ENCODE measurements at regions of chr16 and their contacts with region 1.

Region 1: DNA sequence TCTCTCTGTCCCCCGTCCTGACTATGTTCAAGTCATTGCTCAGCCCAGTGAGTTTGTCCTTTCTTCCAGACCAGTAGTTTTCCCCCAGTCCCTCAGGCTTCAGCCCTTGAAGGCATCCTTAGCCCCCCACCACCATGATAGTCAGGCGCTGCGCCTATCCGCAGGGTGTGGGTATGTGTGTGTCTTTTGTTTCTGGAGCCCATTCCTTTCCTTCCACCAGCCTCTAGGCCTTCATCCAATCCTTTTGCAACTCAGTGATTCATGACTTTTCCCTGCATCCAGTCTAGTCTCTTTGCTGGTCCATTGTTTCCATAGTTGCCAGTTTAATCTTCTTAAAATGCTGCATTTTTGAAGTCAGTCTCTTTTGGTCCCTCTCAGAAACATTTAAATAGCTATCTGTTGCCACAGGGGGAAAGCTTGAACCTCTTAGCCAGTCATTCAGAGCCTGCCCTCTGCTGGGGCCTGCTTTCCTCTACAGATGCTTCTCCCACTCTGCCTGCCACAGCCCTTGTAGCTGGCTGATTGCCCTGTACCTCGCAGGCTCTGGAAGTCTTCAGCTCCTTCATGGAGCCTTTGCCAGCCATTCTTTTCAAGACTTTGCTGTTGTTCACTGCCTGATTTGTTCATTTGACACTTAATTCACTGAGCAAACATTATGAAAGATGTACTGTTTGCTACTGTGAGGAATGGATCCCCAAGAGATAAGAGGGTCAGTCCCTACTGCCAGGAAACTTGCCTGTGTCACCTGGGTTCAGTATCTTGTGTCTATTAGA is 55.9 kb upstream of the ADCY7 start:
- DNase-seq: peak; percentile 42 to 79 (median 58)
- ATAC-seq: peak; percentile 92
- H3K4me3 ChIP-seq: no peak overlapping the region
- H3K4me3 Mint-ChIP-seq: no peak overlapping the region
- H3K27ac ChIP-seq: peak overlapping the region in 1 of 2 donors; percentile 26
- H3K27ac Mint-ChIP-seq: peak overlapping the region; percentile 32
- H3K4me1 ChIP-seq: peaks cover 9% of the 10 kb centered on the region
- H3K4me1 Mint-ChIP-seq: peaks cover 50% of the 10 kb centered on the region
- H3K27me3 ChIP-seq: no peaks in the 10 kb centered on the region
- H3K27me3 Mint-ChIP-seq: no peaks in the 10 kb centered on the region
- CTCF ChIP-seq: peak; percentile 64

Region 2: GRCh38 chr16:50024684-50025536 is 185.5 kb before region 1 on chr16 and contains the start of gene CNEP1R1:
- CTCF ChIA-PET with region 1: interaction called, 27 read pairs
- POLR2A ChIA-PET with region 1: interaction called, 26 read pairs
- intact Hi-C with region 1: loop called (anchors 1 to 2 kb)
- DNase-seq: peak; percentile 83 to 97 (median 91)
- ATAC-seq: peak; percentile 90
- H3K4me3 ChIP-seq: peak within 1 kb of the TSS; percentile 90
- H3K4me3 Mint-ChIP-seq: peak within 1 kb of the TSS; percentile 94
- H3K27ac ChIP-seq: peak within 1 kb of the TSS; percentile 58
- H3K27ac Mint-ChIP-seq: peak within 1 kb of the TSS; percentile 90
- H3K4me1 ChIP-seq: peaks cover 25% of the 10 kb centered on the region
- H3K4me1 Mint-ChIP-seq: peaks cover 38% of the 10 kb centered on the region
- H3K27me3 ChIP-seq: no peaks in the 10 kb centered on the region
- H3K27me3 Mint-ChIP-seq: no peaks in the 10 kb centered on the region
- CTCF ChIP-seq: peak; percentile 99
- total RNA-seq, gene CNEP1R1: 36.6 to 46.3 TPM

Region 3: DNA sequence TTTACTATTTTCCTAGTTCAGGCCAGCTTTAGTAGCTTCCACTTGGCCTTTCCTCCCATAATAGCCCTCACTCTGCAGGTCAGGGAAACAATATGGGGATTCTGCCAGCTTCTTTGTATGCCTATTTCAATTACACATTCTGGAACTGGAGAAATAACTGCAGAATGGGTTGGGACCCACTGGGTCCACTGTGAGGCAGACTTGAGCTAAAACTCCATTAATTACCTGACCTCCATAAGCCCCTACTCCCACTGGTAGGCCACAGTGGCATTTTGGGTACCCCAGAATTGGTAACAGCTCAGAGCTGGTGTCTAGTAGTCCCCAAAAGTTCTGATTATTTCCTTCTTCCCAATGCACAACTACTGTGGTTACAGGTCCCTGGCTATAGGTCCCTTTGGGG is 74.1 kb before region 1 on chr16:
- CTCF ChIA-PET with region 1: interaction called, 4 read pairs
- POLR2A ChIA-PET with region 1: no interaction called
- intact Hi-C with region 1: loop called in 1 of 2 experiments (anchors 2 kb)
- DNase-seq: no peak
- ATAC-seq: no peak
- H3K4me3 ChIP-seq: no peak overlapping the region
- H3K4me3 Mint-ChIP-seq: no peak overlapping the region
- H3K27ac ChIP-seq: no peak overlapping the region
- H3K27ac Mint-ChIP-seq: no peak overlapping the region
- H3K4me1 ChIP-seq: no peaks in the 10 kb centered on the region
- H3K4me1 Mint-ChIP-seq: no peaks in the 10 kb centered on the region
- H3K27me3 ChIP-seq: no peaks in the 10 kb centered on the region
- H3K27me3 Mint-ChIP-seq: no peaks in the 10 kb centered on the region
- CTCF ChIP-seq: no peak

Region 4: DNA sequence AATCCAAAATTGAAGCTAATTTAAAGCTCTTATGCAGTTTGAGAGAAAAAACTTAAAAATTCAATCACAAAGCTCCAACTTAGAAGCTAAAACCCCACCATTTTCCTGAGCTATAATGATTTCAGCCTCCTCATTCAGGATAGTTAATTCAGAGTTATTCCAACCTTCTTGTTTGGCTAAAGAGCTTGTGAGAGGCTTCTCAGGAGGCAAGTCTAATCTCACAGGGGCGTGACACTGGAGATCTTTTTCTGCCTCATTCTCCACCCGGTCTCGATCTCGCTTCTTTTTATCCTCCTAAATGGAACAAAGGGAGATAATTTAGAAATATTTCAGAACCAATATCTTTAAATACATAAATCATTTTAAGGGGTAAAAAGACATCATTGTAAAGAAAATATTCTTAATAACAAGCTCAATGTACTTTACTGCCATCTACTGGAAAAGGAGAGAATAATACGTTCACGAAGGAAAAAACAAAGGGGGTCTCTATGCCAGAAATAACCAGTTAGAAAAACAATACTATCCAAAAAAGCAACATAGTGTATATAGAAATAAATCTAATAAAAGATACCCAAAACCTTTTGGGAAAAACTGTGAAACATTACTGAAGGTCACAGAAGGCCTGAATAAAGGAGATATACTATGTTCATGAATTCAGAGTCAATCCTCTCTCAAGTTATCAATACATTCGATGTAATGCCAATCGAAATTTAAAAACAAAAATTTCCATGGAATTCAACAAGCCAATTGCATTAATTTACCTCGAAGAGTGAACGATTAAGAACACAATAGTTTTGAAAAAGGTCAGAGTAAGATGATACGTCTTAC is 144.4 kb after region 1 on chr16:
- CTCF ChIA-PET with region 1: interaction called, 7 read pairs
- POLR2A ChIA-PET with region 1: no interaction called
- intact Hi-C with region 1: loop called (anchors 1 to 2 kb)
- DNase-seq: peak in 3 of 14 experiments; percentile 49 to 51 (median 50)
- ATAC-seq: peak; percentile 55
- H3K4me3 ChIP-seq: no peak overlapping the region
- H3K4me3 Mint-ChIP-seq: no peak overlapping the region
- H3K27ac ChIP-seq: no peak overlapping the region
- H3K27ac Mint-ChIP-seq: peak overlapping the region; percentile 80
- H3K4me1 ChIP-seq: peaks cover 3% of the 10 kb centered on the region
- H3K4me1 Mint-ChIP-seq: peaks cover 52% of the 10 kb centered on the region
- H3K27me3 ChIP-seq: no peaks in the 10 kb centered on the region
- H3K27me3 Mint-ChIP-seq: no peaks in the 10 kb centered on the region
- CTCF ChIP-seq: peak; percentile 95

Region 5: DNA sequence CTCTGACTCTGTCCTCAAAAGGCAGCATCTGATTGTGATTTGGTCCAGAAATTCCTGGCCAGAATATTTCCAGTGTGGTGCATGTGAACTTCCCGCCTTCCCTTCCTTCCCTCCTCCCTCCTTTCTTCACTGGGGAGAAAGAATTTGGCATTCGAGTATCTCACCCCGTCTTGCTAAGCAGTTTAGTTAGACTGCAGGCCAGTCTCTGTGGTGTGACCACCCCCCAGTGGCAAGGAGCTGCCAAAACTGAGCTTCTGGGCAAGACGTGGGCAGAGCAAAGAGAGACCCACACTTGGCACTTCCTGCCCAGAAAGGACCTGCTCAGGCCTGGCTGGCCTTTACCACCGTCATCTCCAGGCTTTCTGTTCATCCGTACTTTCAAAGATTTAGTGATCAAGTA is 434.3 kb after region 1 on chr16:
- CTCF ChIA-PET with region 1: interaction called, 3 read pairs
- POLR2A ChIA-PET with region 1: no interaction called
- intact Hi-C with region 1: loop called in 1 of 2 experiments (anchors 5 kb)
- DNase-seq: peak in 12 of 14 experiments; percentile 15 to 69 (median 46)
- ATAC-seq: peak; percentile 81
- H3K4me3 ChIP-seq: no peak overlapping the region
- H3K4me3 Mint-ChIP-seq: no peak overlapping the region
- H3K27ac ChIP-seq: no peak overlapping the region
- H3K27ac Mint-ChIP-seq: no peak overlapping the region
- H3K4me1 ChIP-seq: peaks cover 4% of the 10 kb centered on the region
- H3K4me1 Mint-ChIP-seq: peaks cover 6% of the 10 kb centered on the region
- H3K27me3 ChIP-seq: no peaks in the 10 kb centered on the region
- H3K27me3 Mint-ChIP-seq: no peaks in the 10 kb centered on the region
- CTCF ChIP-seq: peak; percentile 50

Measured in CD4-positive, alpha-beta T cell (primary cell).